Tibial artery (tissue), 4 donors: ENCODE measurements at regions of chr11 and their contacts with region 1.

Region 1: DNA sequence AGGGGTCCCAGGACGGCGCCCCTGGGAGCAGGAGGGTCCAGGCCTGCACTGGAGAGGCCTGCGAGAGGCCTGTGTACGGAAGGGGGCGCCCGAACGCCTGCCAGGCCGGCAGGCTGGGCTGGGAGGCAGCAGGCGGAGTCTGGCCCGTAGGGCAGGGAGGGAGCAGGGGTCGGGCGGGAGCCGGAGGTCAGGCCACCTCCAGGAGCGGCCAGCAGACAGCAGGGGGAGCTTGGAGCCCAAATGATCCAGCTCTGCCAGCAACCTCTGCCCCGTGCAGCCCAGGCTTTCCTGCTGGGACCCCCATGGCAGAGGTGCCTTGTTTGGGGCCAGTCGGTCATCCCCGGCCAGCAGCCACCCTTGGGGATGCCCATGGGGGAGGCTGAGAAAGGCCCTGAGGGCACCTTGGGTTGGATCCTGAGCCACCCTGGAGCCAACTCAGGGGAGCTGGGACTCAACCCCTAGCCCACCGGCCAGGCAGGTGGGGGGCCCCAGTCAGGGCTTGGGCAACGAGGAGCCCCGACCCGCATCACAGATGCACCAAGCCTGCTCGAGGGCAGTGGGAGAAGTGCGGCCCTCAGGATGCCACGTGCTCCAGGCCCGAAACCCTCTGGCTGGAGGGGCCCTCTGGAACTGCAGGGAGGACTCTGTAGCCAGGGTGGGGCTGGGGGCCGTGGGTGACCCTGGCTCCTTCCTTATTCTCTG is 9.6 kb upstream of the SYT8 start:
- DNase-seq: peak in 1 of 2 donors; percentile 66
- H3K4me3 ChIP-seq: no peak overlapping the region
- H3K27ac ChIP-seq: peak overlapping the region; percentile 85 to 88
- H3K4me1 ChIP-seq: peaks cover 5 to 94% (median 91%) of the 10 kb centered on the region in 4 donors
- H3K27me3 ChIP-seq: no peaks in the 10 kb centered on the region
- CTCF ChIP-seq: peak in 1 of 2 experiments; percentile 45

Region 2: DNA sequence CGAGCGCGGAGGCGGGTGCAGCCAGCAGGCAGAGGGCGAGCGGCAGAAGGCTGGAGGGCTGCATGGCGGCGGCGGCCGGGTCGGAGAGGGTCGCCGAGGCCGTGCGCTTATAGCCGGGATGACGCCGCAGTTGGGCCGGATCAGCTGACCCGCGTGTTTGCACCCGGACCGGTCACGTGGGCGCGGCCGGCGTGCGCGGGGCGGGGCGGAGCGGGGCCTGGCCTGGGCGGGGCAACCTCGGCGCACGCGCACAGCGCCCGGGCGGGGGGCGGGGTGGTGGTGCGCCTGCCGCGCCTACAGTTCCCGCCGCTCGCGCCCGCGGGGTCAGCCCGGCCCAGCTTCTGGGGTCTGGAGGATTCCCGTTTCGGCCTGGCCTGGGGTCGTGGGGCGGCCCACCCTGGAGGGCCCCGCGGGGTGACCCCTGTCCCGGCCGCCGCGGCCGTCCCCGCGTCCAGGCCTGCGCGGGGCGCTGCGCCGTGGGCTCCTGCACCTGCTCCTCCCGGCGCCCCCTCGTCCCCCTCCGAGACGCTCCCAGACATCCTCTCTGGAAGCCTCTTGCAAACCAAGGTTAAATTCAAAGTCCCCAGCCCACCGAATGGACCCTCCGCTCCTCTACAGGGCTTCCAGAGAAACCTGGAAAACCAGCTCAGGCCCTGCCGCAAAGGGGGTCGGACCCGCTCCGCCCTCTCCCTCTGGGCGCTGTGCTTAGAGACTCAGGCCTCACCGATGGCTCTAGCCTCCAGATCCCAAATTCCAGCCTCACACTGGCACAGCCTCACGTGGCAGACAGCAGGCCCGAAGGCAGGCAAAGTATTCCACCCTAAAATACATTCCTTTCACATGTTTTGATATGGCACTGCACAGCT is 61.2 kb before region 1 on chr11 and contains the start of gene CTSD:
- intact Hi-C with region 1: loop called (anchors 2 kb)
- DNase-seq: peak; percentile 86 to 94
- H3K4me3 ChIP-seq: peak within 1 kb of the TSS; percentile 85 to 98
- H3K27ac ChIP-seq: peak within 1 kb of the TSS; percentile 92 to 93
- H3K4me1 ChIP-seq: peaks cover 0 to 51% (median 43%) of the 10 kb centered on the region in 4 donors
- H3K27me3 ChIP-seq: no peaks in the 10 kb centered on the region
- CTCF ChIP-seq: no peak